ENCODE measurements at regions of chr2 and their contacts with region 1.

Region 1: DNA sequence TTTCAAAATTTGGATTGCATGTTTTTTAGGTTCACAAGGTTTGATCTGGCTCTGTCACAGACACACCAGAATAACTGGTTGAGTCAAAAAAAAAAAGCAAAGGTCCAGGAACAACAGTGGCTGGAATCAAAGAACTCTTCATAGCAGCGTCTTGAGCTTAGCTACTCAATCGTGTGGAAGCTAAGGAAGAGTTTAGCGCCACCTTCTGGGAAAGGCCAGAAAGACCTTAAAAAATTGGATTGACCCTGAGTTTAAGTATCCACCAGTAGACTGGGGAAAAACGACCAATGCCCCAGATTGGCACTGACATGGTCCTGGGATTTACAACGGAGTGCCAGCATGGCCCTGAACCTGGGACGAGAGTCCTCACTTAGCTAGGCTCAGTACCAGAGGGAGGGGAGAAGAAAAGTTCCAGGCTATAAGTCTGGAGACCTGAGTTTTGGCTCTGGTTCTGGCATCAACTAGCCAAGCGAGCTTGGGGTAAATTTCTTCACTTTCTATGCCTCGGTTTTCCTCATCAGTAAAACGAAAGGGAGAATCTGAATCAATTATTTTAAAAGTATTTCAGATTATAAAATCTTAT is 71.1 kb upstream of the TFCP2L1 start:
- DNase-seq: peak; percentile 63
- H3K4me3 ChIP-seq: peak overlapping the region in 1 of 2 experiments; percentile 33; a peak in 1 of 4 replicates
- H3K27ac ChIP-seq: no peak overlapping the region
- H3K4me1 ChIP-seq: peaks cover 15 to 17% of the 10 kb centered on the region in 2 experiments; a peak in 3 of 4 replicates
- H3K27me3 ChIP-seq: no peaks in the 10 kb centered on the region
- CTCF ChIP-seq: peak; percentile 81
- EP300 ChIP-seq: no peak
- RAD21 ChIP-seq: peak; percentile 75

Region 2: DNA sequence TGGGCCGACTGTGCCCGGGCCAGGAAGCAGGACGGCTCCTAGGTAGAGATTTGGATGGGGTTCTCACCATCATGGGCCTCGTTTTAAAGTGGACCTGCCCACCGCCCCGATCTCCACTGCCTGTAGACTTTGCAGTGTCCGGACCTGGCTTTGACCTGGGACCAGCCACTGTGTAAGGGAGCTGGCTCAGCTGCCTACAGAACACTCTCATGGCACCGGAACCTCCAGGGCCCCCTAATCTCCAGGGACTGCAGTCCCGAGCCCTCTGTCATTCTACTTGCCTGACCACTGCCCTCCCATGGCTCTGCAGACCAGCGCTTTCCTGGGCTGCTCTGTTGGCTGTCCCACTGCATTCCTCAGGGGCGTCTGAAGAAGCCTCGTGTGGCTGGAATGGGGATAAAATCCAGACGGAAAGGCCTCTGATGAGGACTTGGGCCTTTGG is 499.7 kb before region 1 on chr2:
- CTCF ChIA-PET with region 1: no interaction called
- POLR2A ChIA-PET with region 1: no interaction called
- DNase-seq: peak; percentile 58
- H3K4me3 ChIP-seq: no peak overlapping the region
- H3K27ac ChIP-seq: peak overlapping the region in 1 of 2 experiments; percentile 41; a peak in 2 of 4 replicates
- H3K4me1 ChIP-seq: peaks cover 0 to 62% of the 10 kb centered on the region in 2 experiments; a peak in 2 of 4 replicates
- H3K27me3 ChIP-seq: no peaks in the 10 kb centered on the region
- CTCF ChIP-seq: peak; percentile 43
- EP300 ChIP-seq: no peak
- RAD21 ChIP-seq: peak; percentile 25; the same call in 1 of the 2 replicates

Region 3: GRCh38 chr2:121052521-121052920 is 303.6 kb before region 1 on chr2:
- CTCF ChIA-PET with region 1: no interaction called
- POLR2A ChIA-PET with region 1: no interaction called
- DNase-seq: no peak
- H3K4me3 ChIP-seq: no peak overlapping the region
- H3K27ac ChIP-seq: no peak overlapping the region
- H3K4me1 ChIP-seq: no peaks in the 10 kb centered on the region
- H3K27me3 ChIP-seq: 0 out of 2 replicates have a peak, but pooled peaks cover 22% of the 10 kb centered on the region
- CTCF ChIP-seq: no peak
- EP300 ChIP-seq: no peak
- RAD21 ChIP-seq: no peak

Region 4: GRCh38 chr2:121088251-121089165 is 267.6 kb before region 1 on chr2:
- CTCF ChIA-PET with region 1: interaction called, 272 read pairs
- POLR2A ChIA-PET with region 1: no interaction called
- DNase-seq: no peak
- H3K4me3 ChIP-seq: no peak overlapping the region
- H3K27ac ChIP-seq: no peak overlapping the region
- H3K4me1 ChIP-seq: no peaks in the 10 kb centered on the region; a peak in 1 of 4 replicates
- H3K27me3 ChIP-seq: no peaks in the 10 kb centered on the region
- CTCF ChIP-seq: no peak
- EP300 ChIP-seq: no peak
- RAD21 ChIP-seq: no peak

Region 5: GRCh38 chr2:121104721-121105141 is 251.4 kb before region 1 on chr2:
- CTCF ChIA-PET with region 1: interaction called, 272 read pairs
- POLR2A ChIA-PET with region 1: no interaction called
- DNase-seq: no peak
- H3K4me3 ChIP-seq: no peak overlapping the region
- H3K27ac ChIP-seq: no peak overlapping the region
- H3K4me1 ChIP-seq: peaks cover 0 to 5% of the 10 kb centered on the region in 2 experiments; a peak in 1 of 4 replicates
- H3K27me3 ChIP-seq: peaks cover 22% of the 10 kb centered on the region
- CTCF ChIP-seq: no peak
- EP300 ChIP-seq: no peak
- RAD21 ChIP-seq: no peak

Region 6: DNA sequence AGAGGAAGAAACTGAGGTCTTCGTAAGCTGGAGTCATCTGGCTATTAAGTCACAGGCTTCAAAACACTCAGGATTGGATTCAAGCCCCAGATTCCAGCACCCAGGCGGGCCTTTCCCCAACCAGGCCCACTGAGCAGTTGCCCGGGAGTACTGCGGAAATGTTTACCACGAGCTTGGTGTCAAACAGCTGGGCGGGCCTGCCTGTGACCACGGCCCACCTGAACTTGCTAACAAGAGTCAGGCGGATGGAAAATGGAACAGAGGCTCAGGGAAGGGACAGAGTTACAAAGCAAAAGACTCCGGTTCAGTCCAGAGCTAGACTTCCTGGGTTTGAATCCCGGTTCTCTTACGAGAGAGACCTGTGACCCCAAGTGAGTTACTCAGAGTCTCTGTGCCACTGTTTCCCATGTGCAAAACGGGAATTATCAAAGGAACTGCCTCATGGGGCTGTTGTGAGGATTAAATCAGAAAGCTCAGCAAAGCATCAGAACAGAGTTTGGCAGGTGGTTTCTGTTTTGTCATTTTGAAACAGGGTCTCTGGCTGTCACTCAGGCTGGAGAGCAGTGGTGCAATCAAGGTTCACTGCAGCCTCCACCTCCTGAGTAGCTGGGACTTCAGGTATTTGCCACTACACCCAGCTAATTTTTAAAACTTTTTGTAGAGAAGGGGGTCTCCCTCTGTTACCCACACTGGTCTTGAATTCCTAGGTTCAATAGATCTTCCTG is 22.2 kb before region 1 on chr2:
- CTCF ChIA-PET with region 1: interaction called, 23 read pairs
- POLR2A ChIA-PET with region 1: no interaction called
- DNase-seq: no peak
- H3K4me3 ChIP-seq: no peak overlapping the region
- H3K27ac ChIP-seq: no peak overlapping the region
- H3K4me1 ChIP-seq: no peaks in the 10 kb centered on the region; a peak in 1 of 4 replicates
- H3K27me3 ChIP-seq: no peaks in the 10 kb centered on the region
- CTCF ChIP-seq: no peak
- EP300 ChIP-seq: no peak
- RAD21 ChIP-seq: no peak

Region 7: DNA sequence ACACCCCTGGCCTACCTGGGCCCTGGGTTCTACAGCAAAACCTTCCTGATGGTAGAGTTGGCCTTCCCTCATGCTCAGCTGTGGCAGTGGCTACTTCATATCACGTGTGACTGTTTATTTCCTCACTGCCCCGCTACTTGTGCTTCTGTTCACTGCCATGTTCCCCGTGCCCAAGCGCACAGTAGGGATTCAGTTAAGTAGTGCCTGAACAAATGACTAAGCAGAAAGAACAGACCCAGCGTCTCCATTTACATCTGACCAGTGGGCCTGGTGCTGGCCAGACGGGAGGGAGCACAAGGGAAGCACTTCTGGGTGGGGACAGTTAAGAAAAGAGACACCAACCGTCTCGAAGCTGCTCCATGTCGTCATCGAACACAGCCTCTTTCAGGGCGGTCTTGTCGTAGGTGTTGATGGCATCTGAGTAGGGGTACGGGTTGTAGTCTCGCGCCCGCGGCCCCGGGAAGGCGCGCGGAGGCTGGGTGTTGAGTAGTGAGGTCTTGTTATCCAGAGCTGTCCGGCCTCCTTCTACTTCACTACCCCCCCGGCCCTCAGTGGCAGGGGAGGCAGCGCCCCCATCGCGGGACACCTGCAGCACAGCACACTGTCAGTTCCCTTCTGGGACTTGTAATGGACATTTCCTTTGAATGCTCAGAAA is 11.2 kb after region 1 on chr2:
- CTCF ChIA-PET with region 1: interaction called, 11 read pairs
- POLR2A ChIA-PET with region 1: no interaction called
- DNase-seq: no peak
- H3K4me3 ChIP-seq: no peak overlapping the region
- H3K27ac ChIP-seq: no peak overlapping the region; a peak in 1 of 4 replicates
- H3K4me1 ChIP-seq: peaks cover 5 to 14% of the 10 kb centered on the region in 2 experiments; a peak in 3 of 4 replicates
- H3K27me3 ChIP-seq: no peaks in the 10 kb centered on the region
- CTCF ChIP-seq: no peak
- EP300 ChIP-seq: no peak
- RAD21 ChIP-seq: no peak

Region 8: GRCh38 chr2:121710470-121711170 is 354.5 kb after region 1 on chr2:
- CTCF ChIA-PET with region 1: no interaction called
- POLR2A ChIA-PET with region 1: no interaction called
- DNase-seq: no peak
- H3K4me3 ChIP-seq: no peak overlapping the region
- H3K27ac ChIP-seq: peak overlapping the region; percentile 21 to 48; a peak in 3 of 4 replicates
- H3K4me1 ChIP-seq: peaks cover 4 to 14% of the 10 kb centered on the region in 2 experiments; a peak in 1 of 4 replicates
- H3K27me3 ChIP-seq: no peaks in the 10 kb centered on the region
- CTCF ChIP-seq: no peak
- EP300 ChIP-seq: no peak
- RAD21 ChIP-seq: no peak

Measured in SK-N-SH (cell line).